ENCODE measurements at regions of chr2 and their contacts with region 1.

Region 1: DNA sequence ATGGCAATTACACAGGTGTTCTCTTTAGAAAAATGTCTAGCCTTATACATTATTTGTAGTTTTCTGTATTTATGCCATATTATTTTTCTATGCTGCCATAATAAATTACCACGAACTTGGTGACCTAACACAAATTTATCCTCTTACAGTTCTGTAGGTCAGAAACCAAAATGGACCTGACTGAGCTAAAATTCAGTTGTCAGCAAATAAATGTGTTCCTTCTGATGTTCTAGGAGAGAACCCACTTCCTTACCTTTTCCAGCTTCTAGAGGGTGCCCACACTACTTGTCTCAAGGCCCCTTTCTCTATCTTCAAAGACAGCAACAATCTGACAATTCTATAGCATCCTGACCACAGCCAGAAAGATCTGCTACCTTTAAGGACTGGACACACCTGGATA is 153.5 kb downstream of the NBAS start:
- DNase-seq: no peak
- H3K4me3 Mint-ChIP-seq: no peak overlapping the region
- H3K27ac Mint-ChIP-seq: no peak overlapping the region
- H3K4me1 Mint-ChIP-seq: no peaks in the 10 kb centered on the region
- H3K27me3 Mint-ChIP-seq: no peaks in the 10 kb centered on the region
- CTCF ChIP-seq: no peak

Region 2: DNA sequence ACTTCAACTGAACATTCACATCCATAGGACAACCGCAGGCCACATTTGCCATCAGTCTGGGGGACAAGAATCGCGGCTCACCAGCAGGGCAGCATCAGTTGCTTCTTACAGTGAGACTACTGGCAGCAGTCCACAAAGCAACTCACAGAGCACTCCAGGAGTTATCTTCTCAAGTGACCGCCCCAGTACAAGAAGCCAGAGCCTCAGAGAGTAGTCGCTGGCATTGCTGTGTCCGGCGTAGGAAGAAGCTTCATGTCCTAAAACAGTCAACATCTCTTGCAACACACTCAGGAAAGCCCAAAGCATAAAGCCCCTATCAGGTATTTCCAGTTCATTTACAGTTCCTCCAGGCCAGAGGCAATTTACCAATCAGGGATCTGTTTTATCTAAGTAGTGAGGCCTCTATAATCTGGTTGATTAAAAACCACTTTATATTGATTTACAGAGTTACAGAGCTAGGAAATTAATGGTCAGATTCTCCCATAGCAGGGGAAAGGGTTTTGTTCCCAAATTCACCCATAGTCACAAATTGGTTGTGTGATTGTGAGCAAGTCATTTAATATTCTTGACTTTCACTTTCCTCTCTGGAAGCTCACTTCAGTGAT is 23.8 kb before region 1 on chr2:
- CTCF ChIA-PET with region 1: no interaction called
- intact Hi-C with region 1: loop called (anchors 2 kb)
- DNase-seq: no peak
- H3K4me3 Mint-ChIP-seq: no peak overlapping the region
- H3K27ac Mint-ChIP-seq: no peak overlapping the region
- H3K4me1 Mint-ChIP-seq: no peaks in the 10 kb centered on the region
- H3K27me3 Mint-ChIP-seq: no peaks in the 10 kb centered on the region
- CTCF ChIP-seq: no peak

Measured in Calu3 (cell line).